ENCODE measurements at regions of chr6 and their contacts with region 1.

Region 1: GRCh38 chr6:31546962-31547726 is at the start of gene NFKBIL1:
- DNase-seq: peak; percentile 90 to 97 (median 91)
- H3K4me3 ChIP-seq: peak within 1 kb of the TSS in 6 of 7 experiments; percentile 60 to 81 (median 72)
- H3K27ac ChIP-seq: peak within 1 kb of the TSS; percentile 74 to 91
- H3K4me1 ChIP-seq: peaks cover 9 to 49% (median 31%) of the 10 kb centered on the region in 4 experiments
- H3K27me3 ChIP-seq: no peaks in the 10 kb centered on the region

Region 2: GRCh38 chr6:31094389-31094881 is 452.7 kb before region 1 on chr6:
- CTCF ChIA-PET with region 1: no interaction called
- POLR2A ChIA-PET with region 1: no interaction called
- DNase-seq: peak; percentile 80 to 96 (median 94)
- H3K4me3 ChIP-seq: peak overlapping the region in 4 of 7 experiments; percentile 26 to 47 (median 36)
- H3K27ac ChIP-seq: peak overlapping the region; percentile 4 to 64
- H3K4me1 ChIP-seq: peaks cover 13 to 61% (median 47%) of the 10 kb centered on the region in 4 experiments
- H3K27me3 ChIP-seq: no peaks in the 10 kb centered on the region

Region 3: GRCh38 chr6:31321820-31322219 is 225.3 kb before region 1 on chr6:
- CTCF ChIA-PET with region 1: no interaction called
- POLR2A ChIA-PET with region 1: no interaction called
- DNase-seq: no peak
- H3K4me3 ChIP-seq: no peak overlapping the region
- H3K27ac ChIP-seq: no peak overlapping the region
- H3K4me1 ChIP-seq: no peaks in the 10 kb centered on the region
- H3K27me3 ChIP-seq: no peaks in the 10 kb centered on the region

Region 4: DNA sequence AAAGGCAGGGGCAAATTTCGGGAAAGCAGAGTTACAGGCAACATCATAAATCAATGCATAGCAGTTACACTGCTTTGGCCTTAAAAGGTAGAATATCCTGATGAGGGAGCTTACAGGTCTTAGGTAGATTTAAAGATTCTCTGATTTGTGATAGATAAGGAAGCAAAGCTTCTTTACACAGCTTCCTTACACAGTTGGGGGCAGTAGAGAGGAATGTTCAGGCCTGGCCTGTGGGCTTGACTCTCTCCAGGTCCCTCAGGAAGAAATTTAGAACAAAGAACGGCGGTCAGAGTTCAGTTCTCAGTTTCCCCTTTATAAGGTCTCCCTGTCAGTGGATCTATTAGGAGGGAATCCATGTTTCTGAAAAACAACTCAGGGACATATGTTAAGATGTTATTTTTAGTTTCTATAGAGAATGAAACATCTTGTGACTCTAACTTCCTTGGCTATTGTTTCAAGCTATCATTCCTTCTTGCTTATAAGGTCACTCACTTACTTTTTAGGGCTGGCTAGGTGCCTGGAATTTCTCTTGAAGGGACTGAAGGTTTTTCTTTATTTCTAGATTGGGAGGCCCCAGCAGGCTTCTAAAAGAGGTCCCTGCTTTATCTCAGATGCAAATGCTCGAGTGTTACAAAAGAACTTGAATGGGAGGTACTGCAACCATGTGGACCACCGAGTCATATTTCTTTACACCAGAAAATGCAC is 202.0 kb before region 1 on chr6:
- CTCF ChIA-PET with region 1: no interaction called
- POLR2A ChIA-PET with region 1: no interaction called
- DNase-seq: no peak
- H3K4me3 ChIP-seq: no peak overlapping the region
- H3K27ac ChIP-seq: no peak overlapping the region
- H3K4me1 ChIP-seq: no peaks in the 10 kb centered on the region
- H3K27me3 ChIP-seq: no peaks in the 10 kb centered on the region

Region 5: GRCh38 chr6:31559958-31560696 is 13.0 kb after region 1 on chr6:
- CTCF ChIA-PET with region 1: interaction called, 38 read pairs
- POLR2A ChIA-PET with region 1: interaction called, 7 read pairs
- DNase-seq: peak; percentile 58 to 91 (median 87)
- H3K4me3 ChIP-seq: peak overlapping the region; percentile 16 to 64 (median 41)
- H3K27ac ChIP-seq: peak overlapping the region in 1 of 2 experiments; percentile 69
- H3K4me1 ChIP-seq: peaks cover 30 to 83% (median 62%) of the 10 kb centered on the region in 4 experiments
- H3K27me3 ChIP-seq: no peaks in the 10 kb centered on the region

Region 6: GRCh38 chr6:31568537-31568961 is 21.4 kb after region 1 on chr6:
- CTCF ChIA-PET with region 1: interaction called, 557 read pairs
- POLR2A ChIA-PET with region 1: no interaction called
- DNase-seq: peak in 2 of 3 donors; percentile 63 to 66
- H3K4me3 ChIP-seq: no peak overlapping the region
- H3K27ac ChIP-seq: no peak overlapping the region
- H3K4me1 ChIP-seq: peaks cover 2 to 35% (median 10%) of the 10 kb centered on the region in 4 experiments
- H3K27me3 ChIP-seq: no peaks in the 10 kb centered on the region

Region 7: GRCh38 chr6:31639449-31639861 is 92.3 kb after region 1 on chr6:
- CTCF ChIA-PET with region 1: interaction called, 10 read pairs
- POLR2A ChIA-PET with region 1: no interaction called
- DNase-seq: peak in 2 of 3 donors; percentile 46 to 52
- H3K4me3 ChIP-seq: no peak overlapping the region
- H3K27ac ChIP-seq: peak overlapping the region in 1 of 2 experiments; percentile 19
- H3K4me1 ChIP-seq: peaks cover 0 to 11% (median 3%) of the 10 kb centered on the region in 4 experiments
- H3K27me3 ChIP-seq: no peaks in the 10 kb centered on the region

Measured in common myeloid progenitor, CD34-positive (primary cell).